GM10248 (cell line): ENCODE measurements at regions of chr2 and their contacts with region 1.

Region 1: DNA sequence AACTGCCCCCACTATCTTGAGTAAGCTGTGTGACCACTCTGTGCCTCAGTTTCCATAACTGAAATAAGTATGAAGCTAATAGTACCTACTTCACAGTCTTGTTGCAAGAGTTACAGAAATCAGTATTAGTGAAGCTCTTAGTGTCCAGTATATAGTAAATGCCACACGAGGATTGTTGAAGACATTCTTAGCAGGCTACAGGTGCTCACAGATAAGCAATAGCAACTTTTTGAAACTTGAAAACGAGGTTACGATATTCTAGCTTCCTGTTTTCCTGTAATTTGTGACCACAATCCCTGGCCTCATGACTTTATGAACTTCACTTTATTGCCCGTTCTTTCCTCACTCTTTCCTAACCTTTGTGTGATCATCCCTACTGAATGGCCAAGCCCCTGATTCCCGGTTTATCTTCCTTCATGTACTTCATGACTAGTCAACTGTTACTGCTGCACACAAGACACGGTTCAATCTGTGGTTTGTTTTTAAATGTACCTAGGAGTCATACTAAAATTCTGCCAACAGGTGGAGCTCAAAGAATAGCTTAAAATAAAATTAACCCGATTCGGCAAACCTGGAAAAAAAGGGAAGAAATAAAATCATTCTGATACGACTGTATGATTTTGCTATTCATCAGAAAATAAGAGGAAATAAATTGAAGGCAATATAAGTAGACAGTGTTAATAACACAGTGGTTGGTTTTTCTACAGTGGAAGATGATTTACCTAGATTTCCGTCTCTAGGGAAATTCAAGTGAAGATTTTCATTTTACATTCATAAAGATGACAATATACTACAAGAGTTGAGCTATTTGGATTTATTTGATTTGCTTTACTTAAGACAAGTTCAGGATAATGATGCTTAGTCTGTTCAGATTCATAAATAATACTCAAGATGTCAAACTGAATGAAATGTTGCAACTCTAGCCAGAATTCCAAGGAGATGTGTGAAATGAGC is 38.1 kb upstream of the STAT1 start:
- DNase-seq: peak; percentile 41
- CTCF ChIP-seq: peak; percentile 52

Region 2: DNA sequence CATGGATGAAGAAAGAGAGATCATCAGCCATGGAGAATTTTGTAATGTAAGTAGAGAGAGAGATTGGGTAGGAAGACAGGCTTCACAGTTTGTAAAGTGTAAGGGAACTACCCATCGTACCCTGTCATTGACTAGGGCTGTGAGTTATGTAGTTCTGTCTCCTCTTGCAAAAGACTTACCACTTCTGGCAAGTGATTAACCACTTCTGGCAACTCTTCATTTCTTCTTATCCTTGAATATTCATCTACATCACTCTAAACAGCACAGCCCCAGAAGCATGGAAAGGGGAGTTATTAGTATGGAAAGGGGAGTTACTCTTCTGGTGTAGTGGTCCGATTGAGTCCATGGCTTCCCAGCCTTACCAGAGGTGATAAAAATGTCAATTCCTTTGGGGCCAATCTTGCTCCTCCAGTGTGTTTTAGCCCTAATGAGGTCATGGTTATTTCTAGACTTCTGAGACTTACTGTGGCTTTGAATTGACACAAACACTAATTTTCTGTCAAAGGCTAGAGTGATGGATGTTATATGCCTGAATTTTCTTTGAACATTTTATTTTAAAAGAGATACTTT is 90.1 kb before region 1 on chr2:
- CTCF ChIA-PET with region 1: no interaction called
- POLR2A ChIA-PET with region 1: no interaction called
- DNase-seq: no peak
- CTCF ChIP-seq: no peak

Region 3: DNA sequence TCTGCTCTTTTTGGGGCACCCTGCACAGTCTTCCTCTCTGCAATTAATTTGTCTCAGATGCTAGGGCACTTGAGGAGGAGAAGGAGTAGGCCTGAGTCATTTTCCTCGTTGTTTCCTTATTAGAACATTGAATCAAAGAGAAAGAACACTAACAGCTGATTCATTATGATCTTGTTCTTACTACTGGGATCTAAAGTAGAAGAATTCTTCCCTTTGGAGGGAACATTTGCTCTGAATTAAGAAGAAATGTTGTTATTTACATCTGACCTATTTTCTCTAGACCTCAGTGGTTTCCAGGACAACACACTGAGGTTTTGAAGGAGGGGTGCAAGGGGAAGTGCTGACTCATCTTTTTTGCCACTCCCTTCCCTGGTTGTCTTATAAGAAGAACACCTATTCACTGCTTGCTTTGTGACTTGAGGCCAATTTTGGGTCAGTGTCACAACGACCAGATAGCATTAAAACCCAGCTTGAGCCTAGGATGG is 13.8 kb before region 1 on chr2:
- CTCF ChIA-PET with region 1: interaction called, 81 read pairs
- POLR2A ChIA-PET with region 1: no interaction called
- DNase-seq: no peak
- CTCF ChIP-seq: no peak

Region 4: DNA sequence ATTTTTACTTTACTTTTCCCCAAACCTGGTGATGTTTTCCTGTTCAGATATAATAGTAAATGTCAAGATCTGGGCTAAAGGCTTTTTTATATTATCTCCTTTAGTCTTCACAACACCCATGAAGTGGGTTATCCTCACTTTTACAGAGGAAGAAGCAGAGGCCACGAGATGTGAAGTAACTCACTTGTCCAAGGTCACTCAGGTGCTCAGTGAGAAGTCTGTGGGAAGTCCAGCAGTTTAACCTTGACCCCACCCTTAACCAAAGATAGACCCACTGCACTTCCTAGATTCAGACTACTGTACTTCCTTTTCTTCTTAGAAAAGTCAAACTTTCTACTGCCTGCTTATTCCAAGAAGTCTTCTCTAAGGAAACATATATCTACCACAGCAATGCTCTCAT is 18.2 kb after region 1 on chr2:
- CTCF ChIA-PET with region 1: interaction called, 51 read pairs
- POLR2A ChIA-PET with region 1: no interaction called
- DNase-seq: no peak
- CTCF ChIP-seq: no peak

Region 5: DNA sequence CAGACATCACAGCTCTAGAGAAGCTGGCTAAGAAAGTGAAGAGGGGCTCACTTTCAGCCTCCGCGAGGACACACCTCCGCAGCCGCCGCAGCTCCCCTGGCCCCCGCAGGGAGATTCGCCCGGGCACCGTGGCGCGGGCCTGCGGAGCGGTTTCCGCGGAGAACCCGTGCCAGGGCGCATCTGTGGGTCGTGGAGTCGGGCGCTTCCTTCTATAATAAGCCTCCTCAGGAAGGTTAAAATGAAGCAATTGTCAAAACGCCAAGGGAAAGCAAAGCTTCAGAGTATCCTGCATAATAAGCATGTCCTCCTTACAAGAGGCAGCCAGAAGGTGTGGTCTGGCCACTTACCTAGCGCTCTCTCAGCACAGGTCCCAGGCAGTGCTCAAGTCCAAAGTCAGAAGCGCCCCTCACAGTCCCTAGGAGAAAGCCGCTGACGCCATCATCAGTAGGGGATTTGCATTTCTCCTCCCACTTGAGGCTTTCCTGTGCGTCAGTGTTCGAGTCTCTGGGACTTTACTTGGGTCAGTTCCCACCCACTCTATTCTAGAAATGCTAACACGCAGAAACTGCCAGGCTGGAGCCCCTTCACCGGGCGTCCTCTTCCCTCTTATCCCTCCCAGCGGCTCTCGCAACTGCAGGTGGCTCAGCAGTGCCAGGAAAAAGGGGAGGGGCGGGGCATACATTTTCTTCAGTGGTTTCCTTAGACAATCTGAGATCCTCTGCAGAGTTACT is 98.7 kb after region 1 on chr2 and contains the start of gene STAT4:
- CTCF ChIA-PET with region 1: interaction called, 187 read pairs
- POLR2A ChIA-PET with region 1: no interaction called
- DNase-seq: peak; percentile 72
- CTCF ChIP-seq: peak; percentile 13

Region 6: GRCh38 chr2:191165176-191165643 is 113.1 kb after region 1 on chr2:
- CTCF ChIA-PET with region 1: interaction called, 32 read pairs
- POLR2A ChIA-PET with region 1: no interaction called
- DNase-seq: peak; percentile 31
- CTCF ChIP-seq: peak; percentile 45